Panc1 (cell line): ENCODE measurements at regions of chr2 and their contacts with region 1.

Region 1: GRCh38 chr2:127288274-127288673 is 5.7 kb downstream of the ERCC3 start:
- DNase-seq: no peak
- ATAC-seq: no peak
- H3K4me3 ChIP-seq: no peak overlapping the region
- H3K27ac ChIP-seq: no peak overlapping the region
- H3K4me1 ChIP-seq: peaks cover 7% of the 10 kb centered on the region
- H3K27me3 ChIP-seq: no peaks in the 10 kb centered on the region
- CTCF ChIP-seq: no peak

Region 2: DNA sequence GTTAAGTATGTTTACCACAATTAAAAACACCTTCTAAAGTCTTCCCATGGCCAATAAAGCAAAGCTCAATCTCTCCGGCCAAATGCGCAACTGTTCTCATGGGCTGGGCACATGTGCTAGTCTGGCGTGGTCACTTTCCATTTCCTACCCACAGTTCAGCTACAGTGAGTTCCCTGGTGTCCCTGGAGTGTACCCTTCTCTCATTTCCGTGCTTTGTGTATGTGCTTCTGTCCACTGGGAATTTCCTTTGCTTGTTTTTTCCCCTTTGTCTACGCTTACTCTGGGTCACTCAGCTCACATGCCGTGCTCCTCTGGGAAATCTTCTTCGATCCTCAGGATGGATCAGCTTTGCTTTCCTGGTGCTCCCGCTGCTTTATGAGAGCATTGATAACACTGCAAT is 702.0 kb before region 1 on chr2:
- CTCF ChIA-PET with region 1: no interaction called
- POLR2A ChIA-PET with region 1: no interaction called
- in situ Hi-C with region 1: no loop called
- intact Hi-C with region 1: no loop called
- DNase-seq: no peak
- ATAC-seq: no peak
- H3K4me3 ChIP-seq: no peak overlapping the region
- H3K27ac ChIP-seq: no peak overlapping the region
- H3K4me1 ChIP-seq: no peaks in the 10 kb centered on the region
- H3K27me3 ChIP-seq: no peaks in the 10 kb centered on the region
- CTCF ChIP-seq: no peak

Region 3: GRCh38 chr2:127205218-127206125 is 82.8 kb before region 1 on chr2:
- CTCF ChIA-PET with region 1: no interaction called
- POLR2A ChIA-PET with region 1: no interaction called
- in situ Hi-C with region 1: no loop called
- intact Hi-C with region 1: no loop called
- DNase-seq: no peak
- ATAC-seq: no peak; the same call in 1 of the 2 replicates
- H3K4me3 ChIP-seq: no peak overlapping the region
- H3K27ac ChIP-seq: no peak overlapping the region
- H3K4me1 ChIP-seq: peaks cover 11% of the 10 kb centered on the region; the same call in 1 of the 2 replicates
- H3K27me3 ChIP-seq: no peaks in the 10 kb centered on the region
- CTCF ChIP-seq: no peak

Region 4: DNA sequence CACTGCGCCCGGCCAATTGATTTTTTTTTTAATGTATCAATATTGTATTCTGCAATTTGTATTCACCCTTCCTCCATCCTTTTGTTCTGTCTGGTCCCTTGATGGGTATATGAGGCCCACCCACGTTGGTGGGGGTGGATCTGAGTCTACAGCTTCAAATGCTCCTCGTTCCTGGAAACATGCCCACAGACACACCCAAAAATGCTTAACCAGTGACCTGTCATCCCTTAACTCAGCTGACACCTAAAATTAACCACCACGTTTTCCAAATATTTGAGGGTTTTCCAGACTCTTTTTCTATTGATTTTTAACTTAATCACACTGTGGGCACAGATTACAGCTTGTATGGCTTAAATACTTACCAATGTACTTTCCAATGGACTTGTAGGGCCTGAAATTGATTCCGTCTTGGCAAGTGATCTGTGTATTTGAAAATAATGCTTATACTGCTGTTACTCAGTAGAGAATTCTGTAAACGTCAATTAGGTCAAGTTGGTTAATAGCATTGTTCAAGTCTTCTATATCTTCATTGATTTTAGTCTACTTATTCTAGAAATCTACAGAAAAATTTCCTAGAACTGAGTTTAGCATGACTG is 33.8 kb before region 1 on chr2:
- CTCF ChIA-PET with region 1: interaction called, 10 read pairs
- POLR2A ChIA-PET with region 1: no interaction called
- in situ Hi-C with region 1: no loop called
- intact Hi-C with region 1: no loop called
- DNase-seq: no peak
- ATAC-seq: no peak
- H3K4me3 ChIP-seq: no peak overlapping the region
- H3K27ac ChIP-seq: no peak overlapping the region
- H3K4me1 ChIP-seq: no peaks in the 10 kb centered on the region
- H3K27me3 ChIP-seq: no peaks in the 10 kb centered on the region
- CTCF ChIP-seq: no peak

Region 5: GRCh38 chr2:127541809-127542208 is 253.5 kb after region 1 on chr2:
- CTCF ChIA-PET with region 1: no interaction called
- POLR2A ChIA-PET with region 1: no interaction called
- in situ Hi-C with region 1: no loop called
- intact Hi-C with region 1: no loop called
- DNase-seq: no peak
- ATAC-seq: peak; percentile 39; the same call in 1 of the 2 replicates
- H3K4me3 ChIP-seq: no peak overlapping the region
- H3K27ac ChIP-seq: no peak overlapping the region
- H3K4me1 ChIP-seq: no peaks in the 10 kb centered on the region
- H3K27me3 ChIP-seq: no peaks in the 10 kb centered on the region
- CTCF ChIP-seq: no peak